GM10248 (cell line): ENCODE measurements at regions of chr1 and their contacts with region 1.

Region 1: GRCh38 chr1:36516372-36517325 is 33.9 kb upstream of the CSF3R start:
- DNase-seq: peak; percentile 84
- CTCF ChIP-seq: peak; percentile 82

Region 2: DNA sequence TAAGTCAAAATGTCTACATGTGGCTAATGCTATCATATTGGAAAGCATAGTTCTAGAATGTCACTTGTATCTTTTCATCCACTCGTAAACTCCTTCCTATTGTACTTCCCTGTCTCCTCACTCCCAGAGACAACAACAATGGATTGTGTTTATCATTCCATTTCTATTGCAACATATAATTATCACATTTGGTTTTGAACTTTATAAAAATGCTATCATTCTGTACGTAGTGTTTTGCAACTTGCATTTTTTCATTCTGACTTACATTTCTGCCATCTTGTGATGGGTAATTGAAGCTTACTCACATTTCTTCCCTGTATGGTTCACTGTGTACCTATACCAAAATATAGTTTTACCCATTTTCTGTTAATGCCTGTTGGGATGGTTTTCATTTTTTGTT is 19.4 kb before region 1 on chr1:
- CTCF ChIA-PET with region 1: interaction called, 17 read pairs
- POLR2A ChIA-PET with region 1: no interaction called
- DNase-seq: no peak
- CTCF ChIP-seq: no peak

Region 3: DNA sequence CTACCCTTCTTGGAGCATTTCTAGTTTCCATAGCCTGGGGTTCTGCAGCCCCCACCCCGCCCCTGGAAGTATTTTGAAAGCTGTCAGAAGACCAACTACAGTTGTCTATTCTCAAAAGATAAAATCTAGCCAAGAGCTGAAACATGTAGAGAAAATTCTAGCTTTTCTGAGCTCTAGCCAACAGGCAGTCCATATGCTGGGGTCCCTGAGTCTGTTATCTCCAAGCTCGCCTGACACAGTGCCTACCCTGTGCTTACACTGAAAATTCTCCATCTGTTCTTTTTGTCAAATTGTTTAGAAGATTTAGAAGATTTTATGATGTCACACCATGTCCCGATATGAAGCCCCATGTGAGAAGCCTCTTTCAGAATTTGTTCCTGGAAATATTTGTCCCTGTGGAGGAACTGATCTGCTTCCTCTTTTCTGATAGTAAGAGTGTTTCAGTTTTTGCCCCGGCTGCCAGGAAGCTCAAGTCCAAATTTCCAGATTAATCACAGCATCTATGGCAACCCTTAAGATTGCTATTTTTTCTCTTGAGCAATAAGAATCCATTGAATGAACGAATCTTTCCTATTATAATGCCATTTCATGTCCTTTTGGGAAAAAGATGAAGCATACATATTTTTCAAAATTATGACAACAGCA is 10.3 kb before region 1 on chr1:
- CTCF ChIA-PET with region 1: interaction called, 21 read pairs
- POLR2A ChIA-PET with region 1: no interaction called
- DNase-seq: no peak
- CTCF ChIP-seq: no peak

Region 4: DNA sequence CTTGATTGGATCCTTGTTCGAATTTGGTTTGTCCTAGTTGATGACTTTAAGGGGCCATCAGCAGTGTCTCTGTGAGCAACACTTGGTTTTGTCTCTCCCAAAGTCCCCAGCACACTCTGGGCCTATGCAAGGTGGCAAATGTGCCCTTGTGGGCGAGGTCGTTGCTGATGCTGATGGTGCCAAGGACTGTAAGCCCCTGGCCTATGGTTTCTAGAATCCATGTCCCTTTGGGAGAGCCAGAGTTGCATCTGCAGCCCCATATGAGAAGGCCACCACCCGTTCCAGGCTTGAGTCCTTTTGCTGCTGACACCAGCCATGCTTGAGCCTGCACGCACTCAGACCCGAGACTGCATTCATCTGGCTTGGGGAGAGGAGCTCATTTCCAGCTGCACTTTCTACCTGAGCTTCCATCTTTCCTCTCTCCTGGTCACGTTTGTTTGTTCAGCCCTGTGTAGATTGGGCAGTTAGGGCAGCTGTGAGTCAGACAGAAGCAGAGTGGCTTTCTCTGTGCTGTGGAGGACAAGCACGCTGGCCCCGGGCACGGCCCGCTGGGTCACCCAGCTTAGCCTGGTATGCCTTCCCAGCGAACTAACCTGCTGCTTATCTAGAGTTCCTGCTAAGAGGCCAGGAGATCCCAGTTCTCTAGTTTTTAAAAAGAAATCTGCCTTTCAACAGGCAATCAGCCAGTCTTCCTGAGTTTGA is 18.2 kb after region 1 on chr1:
- CTCF ChIA-PET with region 1: interaction called, 47 read pairs
- POLR2A ChIA-PET with region 1: no interaction called
- DNase-seq: no peak
- CTCF ChIP-seq: no peak

Region 5: GRCh38 chr1:36542962-36543515 is 26.4 kb after region 1 on chr1:
- CTCF ChIA-PET with region 1: interaction called, 10 read pairs
- POLR2A ChIA-PET with region 1: no interaction called
- DNase-seq: no peak
- CTCF ChIP-seq: no peak

Region 6: GRCh38 chr1:36576118-36576517 is 59.5 kb after region 1 on chr1:
- CTCF ChIA-PET with region 1: interaction called, 12 read pairs
- POLR2A ChIA-PET with region 1: no interaction called
- DNase-seq: peak; percentile 79
- CTCF ChIP-seq: peak; percentile 82

Region 7: DNA sequence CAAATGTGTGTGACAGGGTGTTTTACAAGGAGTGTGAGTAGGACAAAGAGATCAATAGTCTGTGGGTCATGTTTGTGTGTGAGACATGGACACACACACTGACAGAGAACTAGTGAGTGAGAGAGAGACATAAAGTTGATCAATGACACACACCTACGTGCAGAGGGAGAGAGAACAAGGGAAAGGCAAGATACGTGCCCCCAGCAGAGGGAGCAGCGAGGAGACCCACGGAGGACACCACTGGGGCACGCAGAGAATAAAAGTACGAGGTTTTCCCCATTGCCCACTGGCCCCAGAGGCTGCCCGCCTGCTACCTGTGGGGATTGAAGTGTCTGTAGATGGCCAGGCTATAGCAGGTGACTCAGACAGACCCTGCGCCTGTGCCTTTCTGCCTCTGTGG is 96.2 kb after region 1 on chr1:
- CTCF ChIA-PET with region 1: no interaction called
- POLR2A ChIA-PET with region 1: no interaction called
- DNase-seq: no peak
- CTCF ChIP-seq: no peak

Region 8: GRCh38 chr1:37434292-37434907 is 917.8 kb after region 1 on chr1:
- CTCF ChIA-PET with region 1: interaction called, 22 read pairs
- POLR2A ChIA-PET with region 1: no interaction called
- DNase-seq: peak; percentile 87
- CTCF ChIP-seq: peak; percentile 99